Calu3 (cell line): ENCODE measurements at regions of chr13 and their contacts with region 1.

Region 1: DNA sequence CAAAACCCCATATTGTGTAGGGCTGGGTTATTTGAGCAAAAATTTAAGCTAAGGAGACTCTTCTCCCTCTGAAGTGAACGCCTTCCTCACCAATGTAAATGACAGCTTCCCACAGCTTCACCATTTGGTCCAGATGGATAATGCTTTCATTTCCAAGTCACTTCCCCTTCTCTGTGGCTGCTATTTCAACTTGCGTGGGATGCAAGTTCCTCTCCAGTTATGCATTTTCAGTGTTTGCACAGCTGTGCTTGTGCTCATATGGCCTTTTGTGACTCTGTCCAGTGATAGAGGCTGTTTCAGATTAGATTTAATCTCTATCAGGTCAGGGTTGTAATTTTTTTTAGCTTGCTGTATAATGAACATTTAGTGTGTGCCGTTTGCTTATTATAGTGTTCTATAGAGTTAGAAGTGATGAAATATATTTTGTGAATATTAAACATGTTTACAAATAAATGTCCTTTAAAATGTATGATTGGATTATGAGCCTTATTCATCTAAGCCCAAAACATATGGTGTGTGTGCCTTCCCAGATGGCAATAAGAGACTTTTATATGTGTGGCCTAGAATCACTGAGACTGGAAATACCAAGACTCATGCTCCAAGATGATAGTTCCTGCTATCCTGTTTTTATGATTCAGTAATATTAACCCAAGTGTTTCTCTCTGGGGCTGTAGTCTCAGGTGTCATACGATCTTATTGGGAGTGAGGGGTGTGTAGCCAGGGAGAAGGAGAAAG is 86.6 kb downstream of the TNFRSF19 start:
- DNase-seq: no peak
- H3K4me3 Mint-ChIP-seq: no peak overlapping the region
- H3K27ac Mint-ChIP-seq: no peak overlapping the region
- H3K4me1 Mint-ChIP-seq: peaks cover 18% of the 10 kb centered on the region
- H3K27me3 Mint-ChIP-seq: no peaks in the 10 kb centered on the region
- CTCF ChIP-seq: no peak

Region 2: GRCh38 chr13:23447927-23448326 is 208.9 kb before region 1 on chr13:
- CTCF ChIA-PET with region 1: no interaction called
- intact Hi-C with region 1: no loop called
- DNase-seq: no peak
- H3K4me3 Mint-ChIP-seq: no peak overlapping the region
- H3K27ac Mint-ChIP-seq: no peak overlapping the region
- H3K4me1 Mint-ChIP-seq: no peaks in the 10 kb centered on the region
- H3K27me3 Mint-ChIP-seq: no peaks in the 10 kb centered on the region
- CTCF ChIP-seq: no peak

Region 3: DNA sequence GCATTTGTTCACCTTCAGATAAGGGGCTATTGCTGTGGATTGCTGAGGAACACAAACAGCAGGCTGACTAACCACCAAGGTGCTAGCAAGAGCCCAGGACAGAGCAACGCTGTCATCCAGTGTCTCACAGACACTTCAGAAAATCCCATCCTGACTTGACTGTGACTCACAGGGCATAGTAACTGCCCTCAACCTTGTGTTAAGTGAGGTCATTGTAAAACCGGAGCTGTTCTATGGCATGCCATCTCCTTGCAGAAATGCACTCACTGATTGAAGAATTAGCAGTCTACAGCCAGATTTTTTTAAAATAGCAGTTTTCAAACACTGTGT is 35.5 kb before region 1 on chr13:
- CTCF ChIA-PET with region 1: no interaction called
- intact Hi-C with region 1: loop called (anchors 5 kb)
- DNase-seq: peak; percentile 35
- H3K4me3 Mint-ChIP-seq: no peak overlapping the region
- H3K27ac Mint-ChIP-seq: peak overlapping the region; percentile 47
- H3K4me1 Mint-ChIP-seq: peaks cover 39% of the 10 kb centered on the region
- H3K27me3 Mint-ChIP-seq: no peaks in the 10 kb centered on the region
- CTCF ChIP-seq: no peak

Region 4: GRCh38 chr13:23778879-23779278 is 122.1 kb after region 1 on chr13:
- CTCF ChIA-PET with region 1: no interaction called
- intact Hi-C with region 1: no loop called
- DNase-seq: no peak
- H3K4me3 Mint-ChIP-seq: no peak overlapping the region
- H3K27ac Mint-ChIP-seq: peak overlapping the region; percentile 58
- H3K4me1 Mint-ChIP-seq: peaks cover 9% of the 10 kb centered on the region
- H3K27me3 Mint-ChIP-seq: no peaks in the 10 kb centered on the region
- CTCF ChIP-seq: no peak